ENCODE measurements at regions of chr6 and their contacts with region 1.

Region 1: DNA sequence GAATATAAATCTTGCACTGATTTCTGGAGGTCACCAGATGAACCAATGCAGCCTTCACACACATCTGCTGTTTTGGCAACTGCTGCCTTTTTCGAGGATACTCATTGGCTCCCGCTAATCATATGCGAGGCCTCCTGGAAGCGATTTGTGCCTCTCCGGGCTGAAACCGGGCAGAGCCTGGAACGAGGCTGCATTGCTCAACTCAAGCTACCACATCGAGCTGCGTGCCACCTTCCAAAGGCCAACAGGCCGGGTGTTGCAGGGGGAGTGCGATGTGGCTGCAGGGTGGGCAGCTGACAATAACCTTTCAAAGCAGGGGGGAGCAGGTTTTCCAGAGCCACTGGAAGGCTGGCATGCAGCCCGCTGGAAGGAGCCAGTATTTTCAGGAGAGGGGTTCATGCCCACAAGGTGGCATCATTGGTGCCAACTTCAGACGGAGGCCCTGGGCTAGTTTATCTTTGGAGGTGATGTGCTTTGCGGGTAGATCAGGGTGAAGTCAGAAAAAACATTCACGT is 122.6 kb upstream of the IFNGR1 start:
- DNase-seq: peak; percentile 59
- ATAC-seq: peak; percentile 58
- H3K4me3 ChIP-seq: peak overlapping the region; percentile 62; the same call in 1 of the 2 replicates
- H3K27ac ChIP-seq: no peak overlapping the region
- H3K4me1 ChIP-seq: no peaks in the 10 kb centered on the region
- H3K27me3 ChIP-seq: peaks cover 40% of the 10 kb centered on the region
- CTCF ChIP-seq: peak; percentile 62

Region 2: GRCh38 chr6:137309078-137309762 is 32.5 kb before region 1 on chr6:
- CTCF ChIA-PET with region 1: no interaction called
- POLR2A ChIA-PET with region 1: no interaction called
- intact Hi-C with region 1: no loop called
- DNase-seq: peak; percentile 84
- ATAC-seq: peak; percentile 99
- H3K4me3 ChIP-seq: no peak overlapping the region
- H3K27ac ChIP-seq: peak overlapping the region; percentile 16; the same call in 1 of the 2 replicates
- H3K4me1 ChIP-seq: peaks cover 17% of the 10 kb centered on the region
- H3K27me3 ChIP-seq: no peaks in the 10 kb centered on the region
- CTCF ChIP-seq: no peak

Region 3: DNA sequence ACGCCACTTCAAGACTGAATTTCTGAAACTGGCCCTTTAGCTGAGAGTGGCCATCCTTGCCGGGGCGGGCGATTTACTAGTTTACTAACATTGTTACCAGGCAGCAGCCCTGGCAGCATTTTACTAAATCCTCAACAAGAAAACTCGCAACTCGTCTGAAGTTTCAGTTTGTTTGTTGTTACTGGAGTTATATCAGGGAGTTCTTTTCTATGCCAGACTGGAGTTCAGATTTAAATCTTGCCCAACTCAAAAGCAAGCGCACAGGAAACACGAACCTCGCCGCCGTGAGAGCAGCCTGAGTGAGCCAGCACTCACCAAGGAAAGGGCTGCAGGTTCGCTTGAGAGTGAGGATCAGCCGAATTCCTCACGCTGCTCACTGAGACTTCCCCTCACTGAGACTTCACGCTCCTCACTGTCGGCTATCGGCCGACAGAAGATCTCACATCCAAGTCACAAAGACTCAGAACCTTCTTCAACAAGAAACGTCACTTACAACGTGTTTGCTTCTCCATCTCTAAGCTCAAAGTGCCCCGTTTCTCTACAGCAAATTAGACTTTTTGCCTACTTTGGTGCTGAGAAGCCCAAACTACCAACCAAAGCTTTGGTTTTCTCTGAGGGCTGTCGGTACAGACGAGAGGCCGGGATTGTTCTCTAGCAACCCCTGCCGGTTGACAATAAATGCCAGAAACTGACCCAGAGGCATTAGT is 73.5 kb after region 1 on chr6:
- CTCF ChIA-PET with region 1: interaction called, 5 read pairs
- POLR2A ChIA-PET with region 1: no interaction called
- intact Hi-C with region 1: loop called (anchors 1 kb)
- DNase-seq: peak; percentile 77
- ATAC-seq: peak; percentile 95
- H3K4me3 ChIP-seq: peak overlapping the region; percentile 66
- H3K27ac ChIP-seq: no peak overlapping the region
- H3K4me1 ChIP-seq: no peaks in the 10 kb centered on the region
- H3K27me3 ChIP-seq: peaks cover 15% of the 10 kb centered on the region
- CTCF ChIP-seq: peak; percentile 75

Measured in PC-3 (cell line).